A549 (cell line): ENCODE measurements at regions of chr19 and their contacts with region 1.

Region 1: GRCh38 chr19:42363614-42364346 is 26.3 kb downstream of the CNFN start:
- DNase-seq: peak in 1 of 2 experiments; percentile 65
- ATAC-seq: no peak
- H3K4me3 ChIP-seq: no peak overlapping the region
- H3K27ac ChIP-seq: no peak overlapping the region
- H3K4me1 ChIP-seq: no peaks in the 10 kb centered on the region
- CTCF ChIP-seq: no peak
- EP300 ChIP-seq: no peak
- POLR2A ChIP-seq: no peak; the same call in 1 of the 2 replicates
- RAD21 ChIP-seq: no peak

Region 2: GRCh38 chr19:42378225-42379215 is 14.7 kb after region 1 on chr19:
- CTCF ChIA-PET with region 1: interaction called, 20 read pairs
- POLR2A ChIA-PET with region 1: no interaction called
- DNase-seq: no peak
- ATAC-seq: peak in 1 of 2 experiments; percentile 17; a peak in 3 of 6 replicates
- H3K4me3 ChIP-seq: no peak overlapping the region
- H3K27ac ChIP-seq: no peak overlapping the region
- H3K4me1 ChIP-seq: no peaks in the 10 kb centered on the region
- CTCF ChIP-seq: no peak
- EP300 ChIP-seq: no peak
- POLR2A ChIP-seq: no peak
- RAD21 ChIP-seq: no peak